ENCODE measurements at regions of chr11 and their contacts with region 1.

Region 1: DNA sequence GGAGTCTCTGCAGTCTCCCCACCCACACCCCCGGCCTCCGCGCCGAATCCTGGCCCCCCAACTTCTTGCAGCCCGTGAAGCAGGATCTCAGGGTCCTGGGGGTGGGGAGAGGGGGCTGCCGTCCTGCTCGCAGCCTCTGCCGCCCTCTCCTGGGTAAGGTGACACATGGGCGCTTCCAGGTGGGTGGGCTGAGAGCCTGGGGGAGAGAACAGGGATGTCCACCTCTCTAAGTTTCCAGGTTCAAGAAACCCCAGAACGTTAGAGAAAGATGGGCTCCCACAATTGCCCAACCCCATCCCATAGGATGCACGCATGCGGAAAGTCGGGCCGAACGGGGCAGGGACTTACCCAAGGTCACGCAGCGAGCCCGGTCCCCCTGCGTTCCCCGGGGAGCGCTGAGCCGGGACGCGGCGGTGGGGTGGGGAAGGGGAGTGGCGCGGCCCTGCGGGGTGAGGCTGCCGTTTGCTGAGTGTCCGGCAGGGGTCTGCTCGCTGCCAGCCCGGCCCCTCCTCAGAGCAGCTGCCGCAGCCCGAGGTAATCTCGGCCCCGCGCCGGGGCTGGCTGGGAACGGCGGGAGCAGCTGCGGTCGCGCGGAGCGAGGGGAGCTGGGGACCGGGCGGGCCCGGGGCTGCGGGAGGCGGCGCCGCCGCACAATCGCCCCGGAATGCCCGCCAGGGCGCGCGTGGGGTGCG is 705 bp upstream of the CAPN1 start:
- DNase-seq: peak; percentile 70 to 84
- H3K4me3 ChIP-seq: peak overlapping the region; percentile 97
- H3K27ac ChIP-seq: peak overlapping the region; percentile 44
- H3K4me1 ChIP-seq: peaks cover 32% of the 10 kb centered on the region
- H3K27me3 ChIP-seq: no peaks in the 10 kb centered on the region
- CTCF ChIP-seq: peak; percentile 77

Region 2: GRCh38 chr11:64916775-64917662 is 264.0 kb before region 1 on chr11 and contains the start of gene ATG2A:
- CTCF ChIA-PET with region 1: no interaction called
- POLR2A ChIA-PET with region 1: no interaction called
- intact Hi-C with region 1: loop called (anchors 2 kb)
- DNase-seq: peak; percentile 99
- H3K4me3 ChIP-seq: peak within 1 kb of the TSS; percentile 67
- H3K27ac ChIP-seq: peak within 1 kb of the TSS; percentile 50
- H3K4me1 ChIP-seq: peaks cover 16% of the 10 kb centered on the region
- H3K27me3 ChIP-seq: no peaks in the 10 kb centered on the region
- CTCF ChIP-seq: no peak
- total RNA-seq, gene ATG2A: 48.2 and 53.2 TPM in 2 replicates

Region 3: GRCh38 chr11:65027213-65028067 is 153.6 kb before region 1 on chr11 and contains the start of gene SNX15:
- CTCF ChIA-PET with region 1: no interaction called
- POLR2A ChIA-PET with region 1: interaction called, 4 read pairs
- intact Hi-C with region 1: loop called (anchors 5 kb)
- DNase-seq: peak; percentile 90 to 95
- H3K4me3 ChIP-seq: peak within 1 kb of the TSS; percentile 64
- H3K27ac ChIP-seq: peak within 1 kb of the TSS; percentile 36
- H3K4me1 ChIP-seq: peaks cover 9% of the 10 kb centered on the region
- H3K27me3 ChIP-seq: no peaks in the 10 kb centered on the region
- CTCF ChIP-seq: peak; percentile 94
- total RNA-seq, gene SNX15: 38.2 and 40.6 TPM in 2 replicates

Region 4: GRCh38 chr11:65134386-65135253 is 46.4 kb before region 1 on chr11 and contains the start of gene SYVN1:
- CTCF ChIA-PET with region 1: interaction called, 5 read pairs
- POLR2A ChIA-PET with region 1: interaction called, 25 read pairs
- intact Hi-C with region 1: loop called (anchors 1 kb)
- DNase-seq: peak; percentile 95 to 99
- H3K4me3 ChIP-seq: peak within 1 kb of the TSS; percentile 92
- H3K27ac ChIP-seq: peak within 1 kb of the TSS; percentile 92
- H3K4me1 ChIP-seq: peaks cover 19% of the 10 kb centered on the region
- H3K27me3 ChIP-seq: no peaks in the 10 kb centered on the region
- CTCF ChIP-seq: no peak
- total RNA-seq, gene SYVN1: 40.9 and 51.5 TPM in 2 replicates

Region 5: GRCh38 chr11:65169164-65169641 is 11.8 kb before region 1 on chr11:
- CTCF ChIA-PET with region 1: interaction called, 10 read pairs
- POLR2A ChIA-PET with region 1: no interaction called
- intact Hi-C with region 1: no loop called
- DNase-seq: no peak
- H3K4me3 ChIP-seq: no peak overlapping the region
- H3K27ac ChIP-seq: no peak overlapping the region
- H3K4me1 ChIP-seq: no peaks in the 10 kb centered on the region; the same call in 1 of the 2 replicates
- H3K27me3 ChIP-seq: no peaks in the 10 kb centered on the region
- CTCF ChIP-seq: no peak

Region 6: DNA sequence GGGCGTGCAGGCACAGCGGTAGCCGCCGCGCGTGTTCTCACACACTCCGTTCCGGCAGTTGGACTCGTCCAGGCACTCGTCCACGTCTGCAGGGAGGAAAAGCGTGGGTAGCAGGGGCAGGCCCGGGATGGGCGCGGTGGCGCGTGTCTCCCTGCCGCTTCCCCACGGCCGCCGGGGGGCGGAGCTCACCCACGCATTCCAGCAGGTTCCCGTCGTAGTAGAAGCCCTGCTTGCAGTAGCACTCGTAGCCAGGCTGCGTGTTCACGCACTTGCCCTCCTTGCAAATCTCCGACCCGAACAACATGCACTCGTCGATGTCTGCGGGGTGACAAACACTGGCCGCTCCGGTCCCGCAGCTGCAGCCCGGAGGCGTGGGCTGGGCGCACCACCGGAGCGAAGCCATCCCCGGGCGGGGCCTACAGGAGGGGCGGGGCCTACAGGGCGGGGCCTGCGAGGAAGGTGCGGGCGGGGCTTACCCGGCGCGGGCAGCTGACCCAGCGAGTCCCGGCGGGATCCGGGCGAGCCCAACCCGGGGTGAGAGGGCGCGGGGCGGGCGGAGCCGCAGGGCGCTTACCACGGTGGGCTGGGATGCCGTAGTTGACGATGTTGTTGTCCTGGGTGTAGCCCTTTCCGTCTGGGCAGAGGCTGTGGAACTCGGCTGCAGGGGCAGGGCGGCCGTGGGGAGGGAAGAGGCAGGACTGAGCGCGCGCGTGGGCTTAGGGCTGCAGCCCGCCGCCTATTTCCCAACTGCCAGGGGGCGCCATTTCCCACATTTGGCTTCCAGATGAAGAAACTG is 359.5 kb after region 1 on chr11:
- CTCF ChIA-PET with region 1: no interaction called
- POLR2A ChIA-PET with region 1: interaction called, 35 read pairs
- intact Hi-C with region 1: no loop called
- DNase-seq: peak; percentile 66 to 90
- H3K4me3 ChIP-seq: peak overlapping the region; percentile 46; the same call in 1 of the 2 replicates
- H3K27ac ChIP-seq: no peak overlapping the region
- H3K4me1 ChIP-seq: peaks cover 17% of the 10 kb centered on the region
- H3K27me3 ChIP-seq: no peaks in the 10 kb centered on the region
- CTCF ChIP-seq: peak; percentile 95

Measured in PC-9 (cell line).